ENCODE measurements at regions of chr6 and their contacts with region 1.

Region 1: GRCh38 chr6:159989492-159990480 is 20.9 kb downstream of the IGF2R start:
- DNase-seq: no peak
- ATAC-seq: peak; percentile 94
- H3K4me3 ChIP-seq: no peak overlapping the region; the same call in 1 of the 2 replicates
- H3K27ac ChIP-seq: peak overlapping the region; percentile 45
- H3K4me1 ChIP-seq: peaks cover 9% of the 10 kb centered on the region
- H3K27me3 ChIP-seq: no peaks in the 10 kb centered on the region
- CTCF ChIP-seq: no peak
- EP300 ChIP-seq: no peak
- POLR2A ChIP-seq: no peak
- RAD21 ChIP-seq: no peak

Region 2: DNA sequence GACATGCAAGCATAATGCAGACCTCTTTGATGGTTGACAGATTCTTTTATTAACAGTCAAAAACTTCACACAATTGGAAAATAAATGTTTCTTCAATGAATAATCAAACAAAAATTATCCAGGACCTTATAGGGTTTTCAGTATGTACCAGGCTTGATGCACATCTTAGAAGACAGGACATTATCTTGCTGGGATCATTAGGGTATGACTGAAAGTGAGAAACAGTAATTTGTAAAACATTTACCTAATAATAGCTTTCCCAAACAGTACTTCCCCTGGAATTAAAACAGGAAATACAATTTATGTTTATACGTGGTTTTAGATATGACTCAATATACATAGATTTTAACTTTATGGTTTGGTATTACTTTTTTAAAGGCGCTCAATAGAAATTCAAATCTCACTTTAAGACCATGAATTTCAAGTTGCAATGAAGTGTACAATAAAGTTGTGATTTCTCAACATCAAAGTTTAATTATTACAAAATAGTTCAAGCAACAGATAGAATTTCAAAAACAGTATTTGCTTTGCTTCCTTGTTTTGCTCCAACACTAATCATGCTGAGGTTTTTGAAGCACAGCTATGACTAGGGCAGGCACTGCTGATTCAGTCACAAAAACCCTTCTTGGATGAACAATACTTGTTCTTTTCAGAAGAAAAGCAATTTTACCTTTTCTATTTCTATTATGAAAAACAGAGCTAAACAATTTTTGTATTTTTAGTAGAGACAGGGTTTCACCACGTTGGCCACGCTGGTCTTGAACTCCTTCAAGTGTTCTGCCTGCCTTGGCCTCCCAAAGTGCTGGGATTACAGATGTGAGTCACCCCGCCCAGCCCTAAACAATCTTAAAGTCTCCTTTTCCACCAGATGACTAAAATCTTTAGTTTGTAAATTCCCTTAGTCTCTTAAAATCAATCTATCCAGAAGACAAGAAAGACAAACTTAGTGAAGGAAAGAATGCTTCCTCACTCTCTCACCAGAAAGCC is 310.4 kb before region 1 on chr6:
- CTCF ChIA-PET with region 1: no interaction called
- POLR2A ChIA-PET with region 1: no interaction called
- RAD21 ChIA-PET with region 1: no interaction called
- SMC1A ChIA-PET with region 1: no interaction called
- in situ Hi-C with region 1: no loop called
- intact Hi-C with region 1: no loop called
- DNase-seq: no peak
- ATAC-seq: peak; percentile 68
- H3K4me3 ChIP-seq: no peak overlapping the region
- H3K27ac ChIP-seq: no peak overlapping the region
- H3K4me1 ChIP-seq: no peaks in the 10 kb centered on the region
- H3K27me3 ChIP-seq: no peaks in the 10 kb centered on the region
- CTCF ChIP-seq: no peak
- EP300 ChIP-seq: no peak
- POLR2A ChIP-seq: no peak
- RAD21 ChIP-seq: no peak

Region 3: GRCh38 chr6:159874435-159874834 is 115.4 kb before region 1 on chr6:
- CTCF ChIA-PET with region 1: no interaction called
- POLR2A ChIA-PET with region 1: interaction called, 12 read pairs
- RAD21 ChIA-PET with region 1: no interaction called
- SMC1A ChIA-PET with region 1: no interaction called
- in situ Hi-C with region 1: no loop called
- intact Hi-C with region 1: no loop called
- DNase-seq: no peak
- ATAC-seq: no peak
- H3K4me3 ChIP-seq: no peak overlapping the region
- H3K27ac ChIP-seq: no peak overlapping the region
- H3K4me1 ChIP-seq: no peaks in the 10 kb centered on the region
- H3K27me3 ChIP-seq: no peaks in the 10 kb centered on the region
- CTCF ChIP-seq: no peak
- EP300 ChIP-seq: no peak
- POLR2A ChIP-seq: no peak
- RAD21 ChIP-seq: no peak

Region 4: DNA sequence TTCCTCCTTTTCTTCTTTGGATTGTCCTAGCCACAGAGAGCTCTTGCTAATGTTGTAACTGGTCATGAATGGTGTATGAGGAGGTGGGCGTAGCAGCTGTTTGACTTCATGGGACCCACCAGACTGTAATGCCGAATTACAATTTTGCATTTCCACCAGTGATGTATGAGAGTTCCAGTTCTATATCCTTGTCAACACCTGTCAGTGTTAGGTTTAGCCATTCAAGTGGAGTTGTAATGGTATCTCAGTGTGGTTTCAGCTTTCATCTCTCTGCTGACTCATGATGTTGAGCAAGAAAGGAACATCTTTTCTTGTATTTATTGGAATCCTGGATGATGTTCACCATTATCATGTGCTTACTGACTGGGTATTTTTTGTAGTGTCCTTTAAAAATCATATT is 15.8 kb before region 1 on chr6:
- CTCF ChIA-PET with region 1: interaction called, 7 read pairs
- POLR2A ChIA-PET with region 1: interaction called, 34 read pairs
- RAD21 ChIA-PET with region 1: interaction called, 89 read pairs
- SMC1A ChIA-PET with region 1: interaction called, 34 read pairs
- in situ Hi-C with region 1: no loop called
- intact Hi-C with region 1: no loop called
- DNase-seq: no peak
- ATAC-seq: peak; percentile 45
- H3K4me3 ChIP-seq: no peak overlapping the region; the same call in none of the 2 replicates
- H3K27ac ChIP-seq: peak overlapping the region; percentile 67; the same call in 1 of the 2 replicates
- H3K4me1 ChIP-seq: peaks cover 27% of the 10 kb centered on the region
- H3K27me3 ChIP-seq: no peaks in the 10 kb centered on the region
- CTCF ChIP-seq: no peak
- EP300 ChIP-seq: no peak
- POLR2A ChIP-seq: no peak
- RAD21 ChIP-seq: no peak

Region 5: DNA sequence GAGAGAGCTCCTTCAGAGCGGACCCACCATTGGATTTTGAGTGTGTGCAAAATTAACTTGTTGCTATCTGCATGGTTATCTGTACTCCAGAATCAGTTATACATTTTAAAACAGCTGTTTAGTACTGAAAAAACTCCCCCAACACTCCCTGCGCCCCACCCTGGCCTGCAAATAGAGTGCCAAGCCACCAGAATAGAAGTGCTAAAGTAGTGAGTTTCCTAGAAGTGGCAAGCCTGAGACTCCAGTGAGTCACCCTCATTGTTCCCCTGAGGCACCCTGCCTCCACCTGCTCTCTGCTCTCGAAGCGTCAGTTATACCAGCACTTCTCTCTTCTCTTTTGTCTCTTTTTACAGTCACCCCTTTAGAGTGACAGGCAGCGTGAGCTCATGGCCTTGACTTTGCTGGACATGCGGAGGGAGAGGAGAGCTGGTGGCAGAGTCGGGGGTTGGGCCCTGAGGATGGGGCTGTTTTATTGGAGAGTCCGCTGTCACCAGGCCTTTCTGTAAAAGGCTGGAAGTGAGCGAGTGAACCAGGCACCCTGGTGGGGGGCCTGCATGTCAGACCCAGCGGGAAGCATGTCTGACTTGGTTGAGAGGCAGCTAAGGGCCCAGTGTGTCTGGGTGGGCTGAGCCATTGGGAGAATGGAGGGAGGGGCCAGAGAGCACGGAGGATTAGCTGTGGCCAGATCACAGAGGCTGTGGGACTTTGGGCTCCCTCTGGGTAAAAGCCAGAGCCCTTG is 10.5 kb before region 1 on chr6:
- CTCF ChIA-PET with region 1: interaction called, 12 read pairs
- POLR2A ChIA-PET with region 1: interaction called, 34 read pairs
- RAD21 ChIA-PET with region 1: interaction called, 89 read pairs
- SMC1A ChIA-PET with region 1: interaction called, 34 read pairs
- in situ Hi-C with region 1: no loop called
- intact Hi-C with region 1: no loop called
- DNase-seq: peak; percentile 75
- ATAC-seq: peak; percentile 70
- H3K4me3 ChIP-seq: peak overlapping the region; percentile 54
- H3K27ac ChIP-seq: peak overlapping the region; percentile 96
- H3K4me1 ChIP-seq: peaks cover 55% of the 10 kb centered on the region
- H3K27me3 ChIP-seq: no peaks in the 10 kb centered on the region
- CTCF ChIP-seq: 0 out of 6 replicates have a peak, but pooled peaks of 1 of the 3 experiments have one; percentile 2
- EP300 ChIP-seq: peak; percentile 71 to 85; a peak in 3 of 4 replicates
- POLR2A ChIP-seq: peak; percentile 44; the same call in 1 of the 2 replicates
- RAD21 ChIP-seq: no peak

Measured in GM12878 (cell line).